MCF 10A (cell line): ENCODE measurements at regions of chr1 and their contacts with region 1.

Region 1: DNA sequence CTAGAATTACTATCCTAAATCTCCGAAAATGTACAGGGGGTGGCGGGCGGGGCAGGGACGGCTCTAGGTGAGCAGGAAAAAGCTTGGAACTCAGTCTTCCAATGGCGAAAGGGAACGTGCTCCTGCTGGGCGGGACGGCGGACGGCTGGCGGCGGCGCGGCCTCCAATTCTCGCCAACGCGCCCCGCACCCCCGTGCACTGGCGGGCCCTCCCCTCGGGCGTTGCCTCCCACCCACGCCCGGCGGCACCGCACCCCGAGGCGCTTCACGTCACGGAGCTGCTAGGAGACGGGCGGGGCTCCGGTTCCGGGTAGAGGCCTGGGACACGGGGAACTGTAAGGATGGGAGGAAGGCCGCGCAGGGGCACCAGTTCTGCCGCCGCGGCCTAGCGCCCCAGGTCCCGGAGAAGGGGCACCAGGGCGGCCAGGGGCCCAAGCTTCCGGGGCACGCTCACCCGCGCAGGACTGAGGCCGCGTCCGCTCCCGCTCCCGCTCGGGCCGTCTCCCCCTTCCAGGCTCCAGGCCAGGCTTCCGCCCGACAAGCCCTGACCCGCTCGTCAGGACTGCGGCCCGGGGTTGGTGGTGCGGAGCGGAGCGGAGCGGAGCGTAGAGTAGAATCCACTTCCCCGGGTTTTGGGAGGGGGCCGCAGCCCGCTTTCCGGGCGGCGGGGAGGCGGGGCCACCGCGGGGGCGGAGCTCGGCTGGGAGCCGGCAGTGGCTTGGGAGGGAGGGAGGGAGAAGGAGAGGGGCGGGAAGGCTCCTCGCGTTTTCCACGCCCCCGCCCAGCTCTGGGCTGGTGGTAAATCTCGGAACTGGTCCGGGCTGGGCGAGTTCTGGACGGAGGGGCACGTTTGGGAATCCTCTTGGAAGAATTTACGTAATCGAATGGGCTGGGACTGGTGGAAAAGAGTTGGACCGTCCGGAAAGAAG is at the start of gene DDX59:
- DNase-seq: peak; percentile 100
- H3K4me3 Mint-ChIP-seq: peak within 1 kb of the TSS; percentile 74
- H3K27ac Mint-ChIP-seq: peak within 1 kb of the TSS; percentile 91
- H3K4me1 Mint-ChIP-seq: peaks cover 50% of the 10 kb centered on the region
- H3K27me3 Mint-ChIP-seq: no peaks in the 10 kb centered on the region
- CTCF ChIP-seq: no peak
- total RNA-seq, gene DDX59: 36.6 and 50.7 TPM in 2 replicates

Region 2: GRCh38 chr1:200428482-200429205 is 240.9 kb before region 1 on chr1:
- CTCF ChIA-PET with region 1: no interaction called
- POLR2A ChIA-PET with region 1: no interaction called
- intact Hi-C with region 1: no loop called
- DNase-seq: peak; percentile 42
- H3K4me3 Mint-ChIP-seq: no peak overlapping the region
- H3K27ac Mint-ChIP-seq: peak overlapping the region; percentile 14
- H3K4me1 Mint-ChIP-seq: peaks cover 6% of the 10 kb centered on the region
- H3K27me3 Mint-ChIP-seq: no peaks in the 10 kb centered on the region
- CTCF ChIP-seq: no peak

Region 3: GRCh38 chr1:200493344-200493743 is 176.2 kb before region 1 on chr1:
- CTCF ChIA-PET with region 1: no interaction called
- POLR2A ChIA-PET with region 1: no interaction called
- intact Hi-C with region 1: no loop called
- DNase-seq: no peak
- H3K4me3 Mint-ChIP-seq: no peak overlapping the region
- H3K27ac Mint-ChIP-seq: no peak overlapping the region
- H3K4me1 Mint-ChIP-seq: peaks cover 8% of the 10 kb centered on the region
- H3K27me3 Mint-ChIP-seq: no peaks in the 10 kb centered on the region
- CTCF ChIP-seq: no peak

Region 4: DNA sequence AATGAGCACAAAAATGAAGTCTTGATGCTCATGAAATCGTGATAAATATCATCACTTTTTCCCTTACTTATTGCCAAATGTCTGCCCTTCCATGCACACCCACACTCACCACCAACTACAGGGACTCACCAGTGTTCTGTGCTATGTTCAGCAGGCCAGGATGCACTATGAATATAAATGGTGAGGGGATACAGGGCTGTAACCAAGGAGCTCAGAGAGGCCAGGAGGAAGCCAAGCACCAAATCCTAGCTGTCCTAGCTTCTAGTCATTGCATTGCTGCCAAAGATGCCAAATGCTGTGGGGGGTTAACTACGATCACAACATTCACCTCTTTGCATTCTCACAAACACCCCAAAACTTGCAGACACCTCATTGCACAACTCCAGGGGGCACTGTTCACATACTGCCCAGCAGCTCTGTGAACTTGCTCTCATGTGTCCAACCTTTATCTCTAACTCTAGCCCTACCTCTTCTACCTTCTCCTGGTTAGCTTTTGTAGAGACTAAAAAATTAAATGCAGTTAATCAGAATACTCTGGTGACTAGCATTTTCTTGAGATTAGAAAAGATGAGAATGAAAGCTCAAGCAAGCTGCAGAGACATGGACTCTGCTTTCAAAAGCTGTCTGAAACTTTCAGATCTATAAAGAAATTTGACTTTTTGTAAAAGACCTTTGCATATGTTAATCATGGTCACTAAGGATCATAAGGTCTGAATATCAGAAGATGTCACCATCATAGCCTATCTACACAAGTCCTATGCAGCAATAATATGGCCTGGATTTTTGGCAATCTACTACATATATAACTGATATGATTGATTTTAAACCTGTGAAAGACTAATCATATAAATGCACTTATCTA is 35.1 kb before region 1 on chr1:
- CTCF ChIA-PET with region 1: interaction called, 3 read pairs
- POLR2A ChIA-PET with region 1: interaction called, 208 read pairs
- intact Hi-C with region 1: no loop called
- DNase-seq: peak; percentile 43
- H3K4me3 Mint-ChIP-seq: no peak overlapping the region
- H3K27ac Mint-ChIP-seq: no peak overlapping the region
- H3K4me1 Mint-ChIP-seq: no peaks in the 10 kb centered on the region
- H3K27me3 Mint-ChIP-seq: no peaks in the 10 kb centered on the region
- CTCF ChIP-seq: peak; percentile 41

Region 5: DNA sequence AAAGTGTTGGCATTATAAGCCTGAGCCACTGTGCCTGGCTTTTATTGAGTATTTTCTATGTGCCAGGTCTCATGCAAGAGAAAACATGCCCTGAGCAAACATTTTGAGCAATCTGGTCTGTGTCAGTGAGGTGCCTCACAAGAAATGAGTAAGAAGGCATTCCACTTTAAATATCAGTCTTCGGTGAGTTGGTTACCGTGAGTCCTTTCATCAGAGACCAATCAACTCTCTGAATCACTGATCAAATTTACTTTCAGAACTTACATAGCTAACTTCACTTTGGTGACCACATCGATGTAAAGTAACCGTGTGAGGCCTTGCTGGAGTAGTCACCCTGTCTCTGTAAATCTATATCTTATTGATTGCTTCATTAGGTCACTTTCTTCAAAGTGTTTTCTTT is 14.4 kb after region 1 on chr1:
- CTCF ChIA-PET with region 1: interaction called, 5 read pairs
- POLR2A ChIA-PET with region 1: interaction called, 88 read pairs
- intact Hi-C with region 1: no loop called
- DNase-seq: peak; percentile 75
- H3K4me3 Mint-ChIP-seq: no peak overlapping the region
- H3K27ac Mint-ChIP-seq: peak overlapping the region; percentile 46
- H3K4me1 Mint-ChIP-seq: peaks cover 5% of the 10 kb centered on the region
- H3K27me3 Mint-ChIP-seq: no peaks in the 10 kb centered on the region
- CTCF ChIP-seq: no peak

Region 6: GRCh38 chr1:200751717-200752116 is 82.1 kb after region 1 on chr1:
- CTCF ChIA-PET with region 1: interaction called, 3 read pairs
- POLR2A ChIA-PET with region 1: interaction called, 30 read pairs
- intact Hi-C with region 1: no loop called
- DNase-seq: no peak
- H3K4me3 Mint-ChIP-seq: no peak overlapping the region
- H3K27ac Mint-ChIP-seq: no peak overlapping the region
- H3K4me1 Mint-ChIP-seq: peaks cover 52% of the 10 kb centered on the region
- H3K27me3 Mint-ChIP-seq: no peaks in the 10 kb centered on the region
- CTCF ChIP-seq: no peak

Region 7: GRCh38 chr1:200786788-200787187 is 117.2 kb after region 1 on chr1:
- CTCF ChIA-PET with region 1: interaction called, 5 read pairs
- POLR2A ChIA-PET with region 1: interaction called, 26 read pairs
- intact Hi-C with region 1: no loop called
- DNase-seq: no peak
- H3K4me3 Mint-ChIP-seq: no peak overlapping the region
- H3K27ac Mint-ChIP-seq: no peak overlapping the region
- H3K4me1 Mint-ChIP-seq: peaks cover 25% of the 10 kb centered on the region
- H3K27me3 Mint-ChIP-seq: no peaks in the 10 kb centered on the region
- CTCF ChIP-seq: no peak

Region 8: DNA sequence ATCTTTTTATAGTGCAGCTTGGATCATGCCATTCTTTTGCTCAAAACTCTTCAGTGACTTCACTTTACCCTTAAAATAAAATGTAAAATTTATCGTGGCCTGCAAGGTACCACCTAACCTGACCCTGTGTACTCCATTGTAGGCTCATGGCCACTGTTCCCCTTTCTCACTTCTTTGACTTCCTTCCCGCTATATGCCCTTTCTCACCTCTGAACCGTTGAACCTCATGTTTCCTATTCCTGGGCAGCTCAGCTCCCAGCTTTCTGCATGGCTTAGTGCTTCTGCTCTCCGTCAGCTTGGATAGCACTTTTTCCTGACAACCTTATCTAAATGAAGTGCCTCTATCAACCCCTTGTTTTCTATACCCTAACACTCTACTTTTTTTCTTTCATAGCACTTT is 142.1 kb after region 1 on chr1:
- CTCF ChIA-PET with region 1: no interaction called
- POLR2A ChIA-PET with region 1: interaction called, 23 read pairs
- intact Hi-C with region 1: no loop called
- DNase-seq: no peak
- H3K4me3 Mint-ChIP-seq: no peak overlapping the region
- H3K27ac Mint-ChIP-seq: peak overlapping the region; percentile 0
- H3K4me1 Mint-ChIP-seq: peaks cover 17% of the 10 kb centered on the region
- H3K27me3 Mint-ChIP-seq: no peaks in the 10 kb centered on the region
- CTCF ChIP-seq: no peak